Sigmoid colon (tissue), 7 donors: ENCODE measurements at regions of chr12 and their contacts with region 1.

Region 1: GRCh38 chr12:54220092-54220557 is 31.3 kb upstream of the SMUG1 start:
- DNase-seq: peak; percentile 85
- H3K4me3 ChIP-seq: no peak overlapping the region
- H3K27ac ChIP-seq: no peak overlapping the region
- H3K4me1 ChIP-seq: peaks cover 0 to 21% (median 17%) of the 10 kb centered on the region in 4 donors
- H3K27me3 ChIP-seq: peaks cover 19 to 32% (median 28%) of the 10 kb centered on the region in 3 donors
- CTCF ChIP-seq: peak; percentile 64 to 78 (median 68)
- EP300 ChIP-seq: no peak
- POLR2A ChIP-seq: no peak

Region 2: GRCh38 chr12:54259194-54260011 is 39.3 kb after region 1 on chr12:
- intact Hi-C with region 1: loop called (anchors 5 kb)
- DNase-seq: peak; percentile 92
- H3K4me3 ChIP-seq: peak overlapping the region; percentile 26 to 50 (median 46)
- H3K27ac ChIP-seq: peak overlapping the region; percentile 60 to 86 (median 68)
- H3K4me1 ChIP-seq: peaks cover 0 to 48% (median 34%) of the 10 kb centered on the region in 4 donors
- H3K27me3 ChIP-seq: no peaks in the 10 kb centered on the region
- CTCF ChIP-seq: no peak
- EP300 ChIP-seq: no peak
- POLR2A ChIP-seq: no peak